HepG2 (cell line): ENCODE measurements at regions of chrX and their contacts with region 1.

Region 1: GRCh38 chrX:8075636-8076035 is 95.4 kb downstream of the VCX2 start:
- DNase-seq: no peak
- ATAC-seq: no peak
- H3K4me3 ChIP-seq: no peak overlapping the region
- H3K27ac ChIP-seq: no peak overlapping the region
- H3K4me1 ChIP-seq: no peaks in the 10 kb centered on the region
- H3K27me3 ChIP-seq: no peaks in the 10 kb centered on the region
- CTCF ChIP-seq: no peak
- EP300 ChIP-seq: no peak
- POLR2A ChIP-seq: no peak
- RAD21 ChIP-seq: no peak

Region 2: DNA sequence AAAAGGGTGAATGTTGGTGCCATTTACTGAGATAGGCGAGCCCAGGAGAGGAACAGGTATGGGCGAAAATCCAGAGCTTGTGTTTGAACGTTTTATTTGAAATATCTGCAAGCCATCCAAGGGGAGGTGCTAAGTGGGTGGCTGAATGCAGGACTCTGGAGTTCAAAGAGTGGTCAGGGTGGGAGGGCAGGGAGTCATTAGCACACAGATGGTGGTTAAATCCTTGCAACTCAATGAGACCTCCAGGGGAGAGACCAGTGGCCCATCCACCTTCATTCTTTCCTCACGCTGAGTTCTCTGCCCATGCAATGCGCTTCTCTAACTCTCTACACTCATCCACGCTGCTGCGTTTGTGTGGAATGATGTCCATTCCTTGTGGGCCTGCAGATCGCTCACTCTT is 490.1 kb after region 1 on chrX:
- CTCF ChIA-PET with region 1: no interaction called
- POLR2A ChIA-PET with region 1: no interaction called
- in situ Hi-C with region 1: no loop called
- intact Hi-C with region 1: loop called (anchors 5 kb)
- DNase-seq: no peak
- ATAC-seq: no peak
- H3K4me3 ChIP-seq: no peak overlapping the region
- H3K27ac ChIP-seq: no peak overlapping the region
- H3K4me1 ChIP-seq: no peaks in the 10 kb centered on the region
- H3K27me3 ChIP-seq: no peaks in the 10 kb centered on the region
- CTCF ChIP-seq: no peak
- EP300 ChIP-seq: no peak
- POLR2A ChIP-seq: no peak
- RAD21 ChIP-seq: no peak